ENCODE measurements at regions of chr6 and their contacts with region 1.

Region 1: GRCh38 chr6:32666420-32667300 is at the start of gene HLA-DQB1:
- DNase-seq: peak in 8 of 9 experiments; percentile 26 to 80 (median 58)
- ATAC-seq: peak; percentile 80
- H3K4me3 ChIP-seq: peak within 1 kb of the TSS; percentile 48 to 49
- H3K4me3 Mint-ChIP-seq: peak within 1 kb of the TSS; percentile 83
- H3K27ac ChIP-seq: peak within 1 kb of the TSS; percentile 37 to 39
- H3K27ac Mint-ChIP-seq: peak within 1 kb of the TSS; percentile 62
- H3K4me1 ChIP-seq: peaks cover 23% of the 10 kb centered on the region
- H3K4me1 Mint-ChIP-seq: peaks cover 44% of the 10 kb centered on the region
- H3K27me3 ChIP-seq: no peaks in the 10 kb centered on the region
- H3K27me3 Mint-ChIP-seq: peaks cover 28% of the 10 kb centered on the region
- CTCF ChIP-seq: no peak
- total RNA-seq, gene HLA-DQB1: 27.5 to 30.6 TPM

Region 2: DNA sequence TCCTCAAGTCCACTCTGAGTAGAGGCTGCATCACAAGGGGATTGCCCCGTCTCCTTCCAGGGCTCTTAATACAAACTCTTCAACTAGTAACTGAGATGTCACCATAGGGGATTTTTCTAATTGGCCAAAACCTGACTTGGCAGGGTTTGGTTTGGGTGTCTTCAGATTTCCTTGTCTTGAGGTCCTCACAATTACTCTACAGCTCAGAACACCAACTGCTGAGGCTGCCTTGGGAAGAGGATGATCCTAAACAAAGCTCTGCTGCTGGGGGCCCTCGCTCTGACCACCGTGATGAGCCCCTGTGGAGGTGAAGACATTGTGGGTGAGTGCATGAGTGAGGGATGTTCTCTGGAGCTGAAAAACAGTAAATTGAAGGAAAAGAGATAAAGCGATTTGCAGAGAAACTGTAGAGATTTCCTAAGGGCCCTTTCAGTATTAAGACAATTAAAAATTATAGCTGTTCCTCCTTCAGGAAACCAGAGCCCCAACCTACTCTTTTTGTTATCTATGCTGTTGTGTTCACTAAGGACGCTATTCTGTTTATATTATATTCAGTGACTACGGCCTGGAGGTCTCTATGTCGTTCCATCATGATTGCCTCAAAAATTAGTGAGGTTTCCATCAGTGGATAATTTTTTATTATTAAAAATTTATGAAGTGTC is 29.3 kb before region 1 on chr6 and contains the start of gene HLA-DQA1:
- CTCF ChIA-PET with region 1: no interaction called
- POLR2A ChIA-PET with region 1: no interaction called
- intact Hi-C with region 1: no loop called
- DNase-seq: peak in 3 of 9 experiments; percentile 22 to 80 (median 44)
- ATAC-seq: peak; percentile 69
- H3K4me3 ChIP-seq: peak within 1 kb of the TSS in 1 of 2 experiments; percentile 20
- H3K4me3 Mint-ChIP-seq: peak within 1 kb of the TSS; percentile 66
- H3K27ac ChIP-seq: peak within 1 kb of the TSS; percentile 8 to 46
- H3K27ac Mint-ChIP-seq: peak within 1 kb of the TSS; percentile 82
- H3K4me1 ChIP-seq: no peaks in the 10 kb centered on the region
- H3K4me1 Mint-ChIP-seq: peaks cover 14% of the 10 kb centered on the region
- H3K27me3 ChIP-seq: no peaks in the 10 kb centered on the region
- H3K27me3 Mint-ChIP-seq: peaks cover 17% of the 10 kb centered on the region
- CTCF ChIP-seq: no peak
- total RNA-seq, gene HLA-DQA1: 5.4 to 5.5 TPM

Region 3: DNA sequence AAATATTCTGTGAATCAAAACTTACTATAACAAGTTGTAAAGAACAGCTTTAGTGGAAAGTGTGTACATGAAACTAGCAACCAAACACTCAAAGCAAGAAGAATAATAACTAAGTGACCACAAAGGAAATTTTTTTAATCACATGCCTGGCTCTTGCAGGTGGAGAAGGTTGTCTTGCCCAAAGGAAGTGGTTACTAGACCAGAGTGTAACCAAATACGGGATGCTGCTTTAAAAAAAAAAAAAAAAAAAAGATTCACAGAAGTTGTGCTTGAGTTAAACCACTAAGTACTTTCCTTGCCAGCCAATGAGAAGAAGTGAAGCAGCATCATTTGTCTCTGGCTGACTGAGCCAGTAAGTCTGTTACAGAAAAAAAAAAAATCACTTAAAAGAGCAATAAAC is 18.9 kb after region 1 on chr6:
- CTCF ChIA-PET with region 1: no interaction called
- POLR2A ChIA-PET with region 1: interaction called, 3 read pairs
- intact Hi-C with region 1: loop called (anchors 1 kb)
- DNase-seq: peak in 4 of 9 experiments; percentile 32 to 93 (median 62)
- ATAC-seq: peak; percentile 91
- H3K4me3 ChIP-seq: no peak overlapping the region
- H3K4me3 Mint-ChIP-seq: peak overlapping the region; percentile 1
- H3K27ac ChIP-seq: peak overlapping the region in 1 of 2 experiments; percentile 66
- H3K27ac Mint-ChIP-seq: peak overlapping the region; percentile 50
- H3K4me1 ChIP-seq: peaks cover 19% of the 10 kb centered on the region
- H3K4me1 Mint-ChIP-seq: peaks cover 24% of the 10 kb centered on the region
- H3K27me3 ChIP-seq: no peaks in the 10 kb centered on the region
- H3K27me3 Mint-ChIP-seq: no peaks in the 10 kb centered on the region
- CTCF ChIP-seq: no peak

Measured in CD8-positive, alpha-beta T cell (primary cell).